Esophagus muscularis mucosa (tissue), 4 donors: ENCODE measurements at regions of chr6 and their contacts with region 1.

Region 1: GRCh38 chr6:96626759-96627364 is 63.9 kb downstream of the FHL5 start:
- DNase-seq: no peak
- H3K4me3 ChIP-seq: no peak overlapping the region
- H3K27ac ChIP-seq: no peak overlapping the region
- H3K4me1 ChIP-seq: peaks cover 0 to 3% (median 0%) of the 10 kb centered on the region in 4 donors
- H3K27me3 ChIP-seq: no peaks in the 10 kb centered on the region
- CTCF ChIP-seq: peak; percentile 14 to 38 (median 27)
- EP300 ChIP-seq: no peak
- POLR2A ChIP-seq: no peak

Region 2: GRCh38 chr6:96186521-96187222 is 440.2 kb before region 1 on chr6:
- intact Hi-C with region 1: no loop called
- DNase-seq: no peak
- H3K4me3 ChIP-seq: no peak overlapping the region
- H3K27ac ChIP-seq: no peak overlapping the region
- H3K4me1 ChIP-seq: no peaks in the 10 kb centered on the region
- H3K27me3 ChIP-seq: no peaks in the 10 kb centered on the region
- CTCF ChIP-seq: no peak
- EP300 ChIP-seq: no peak
- POLR2A ChIP-seq: no peak

Region 3: DNA sequence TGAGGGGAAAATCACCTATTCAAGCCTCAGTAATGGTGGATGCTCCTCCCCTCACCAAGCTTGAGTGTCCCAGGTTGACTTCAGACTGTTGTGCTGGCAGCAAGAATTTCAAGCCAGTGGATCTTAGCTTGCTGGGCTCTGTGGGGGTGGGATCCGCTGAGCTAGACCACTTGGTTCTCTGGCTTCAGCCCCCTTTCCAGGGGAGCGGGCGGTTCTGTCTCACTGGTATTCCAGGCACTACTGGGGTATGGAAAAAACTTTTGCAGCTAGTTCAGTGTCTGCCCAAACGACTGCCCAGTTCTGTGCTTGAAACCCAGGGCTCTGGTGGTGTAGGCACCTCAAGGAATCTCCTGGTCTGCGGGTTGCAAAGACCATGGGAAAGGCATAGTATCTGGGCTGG is 148.2 kb before region 1 on chr6:
- intact Hi-C with region 1: no loop called
- DNase-seq: no peak
- H3K4me3 ChIP-seq: no peak overlapping the region
- H3K27ac ChIP-seq: no peak overlapping the region
- H3K4me1 ChIP-seq: no peaks in the 10 kb centered on the region
- H3K27me3 ChIP-seq: no peaks in the 10 kb centered on the region
- CTCF ChIP-seq: no peak
- EP300 ChIP-seq: no peak
- POLR2A ChIP-seq: no peak

Region 4: GRCh38 chr6:96563853-96564252 is 63.0 kb before region 1 on chr6:
- intact Hi-C with region 1: no loop called
- DNase-seq: no peak
- H3K4me3 ChIP-seq: peak overlapping the region; percentile 4 to 32 (median 14)
- H3K27ac ChIP-seq: peak overlapping the region in 1 of 4 donors; percentile 16
- H3K4me1 ChIP-seq: peaks cover 0 to 4% (median 0%) of the 10 kb centered on the region in 4 donors
- H3K27me3 ChIP-seq: no peaks in the 10 kb centered on the region
- CTCF ChIP-seq: no peak
- EP300 ChIP-seq: no peak
- POLR2A ChIP-seq: no peak

Region 5: DNA sequence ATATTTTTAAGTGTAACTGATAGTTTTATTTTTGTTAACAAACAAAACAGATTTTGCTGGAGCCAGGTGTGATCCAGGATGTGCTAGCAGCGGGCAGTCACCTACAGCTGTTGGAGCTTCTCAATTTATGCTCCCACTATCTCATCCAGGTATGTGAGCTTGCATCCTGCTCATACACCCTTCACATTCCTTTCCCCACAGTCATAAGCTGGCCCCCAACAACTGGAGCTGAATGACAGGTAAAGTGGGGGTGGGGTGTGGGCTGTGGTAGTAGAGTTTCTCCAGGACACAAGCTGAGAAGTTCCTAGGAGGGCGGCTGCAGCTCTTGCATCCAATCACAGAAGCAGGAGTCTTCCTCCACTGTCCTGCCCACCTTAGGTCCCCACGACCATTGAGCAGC is 437.7 kb after region 1 on chr6:
- intact Hi-C with region 1: loop called (anchors 5 kb)
- DNase-seq: no peak
- H3K4me3 ChIP-seq: no peak overlapping the region
- H3K27ac ChIP-seq: no peak overlapping the region
- H3K4me1 ChIP-seq: no peaks in the 10 kb centered on the region
- H3K27me3 ChIP-seq: peaks cover 0 to 9% (median 0%) of the 10 kb centered on the region in 4 donors
- CTCF ChIP-seq: no peak
- EP300 ChIP-seq: no peak
- POLR2A ChIP-seq: no peak